Cardiac septum (tissue), 1 donor: ENCODE measurements at regions of chr1 and their contacts with region 1.

Region 1: GRCh38 chr1:68111519-68112436 is 61.4 kb upstream of the DIRAS3 start:
- DNase-seq: peak; percentile 82

Region 2: GRCh38 chr1:67766141-67766978 is 345.4 kb before region 1 on chr1:
- intact Hi-C with region 1: loop called (anchors 5 kb)
- DNase-seq: no peak

Region 3: GRCh38 chr1:68010090-68010489 is 101.7 kb before region 1 on chr1:
- intact Hi-C with region 1: loop called (anchors 5 kb)
- DNase-seq: no peak

Region 4: GRCh38 chr1:68141071-68142021 is 29.6 kb after region 1 on chr1:
- intact Hi-C with region 1: no loop called
- DNase-seq: no peak